ENCODE measurements at regions of chr19 and their contacts with region 1.

Region 1: DNA sequence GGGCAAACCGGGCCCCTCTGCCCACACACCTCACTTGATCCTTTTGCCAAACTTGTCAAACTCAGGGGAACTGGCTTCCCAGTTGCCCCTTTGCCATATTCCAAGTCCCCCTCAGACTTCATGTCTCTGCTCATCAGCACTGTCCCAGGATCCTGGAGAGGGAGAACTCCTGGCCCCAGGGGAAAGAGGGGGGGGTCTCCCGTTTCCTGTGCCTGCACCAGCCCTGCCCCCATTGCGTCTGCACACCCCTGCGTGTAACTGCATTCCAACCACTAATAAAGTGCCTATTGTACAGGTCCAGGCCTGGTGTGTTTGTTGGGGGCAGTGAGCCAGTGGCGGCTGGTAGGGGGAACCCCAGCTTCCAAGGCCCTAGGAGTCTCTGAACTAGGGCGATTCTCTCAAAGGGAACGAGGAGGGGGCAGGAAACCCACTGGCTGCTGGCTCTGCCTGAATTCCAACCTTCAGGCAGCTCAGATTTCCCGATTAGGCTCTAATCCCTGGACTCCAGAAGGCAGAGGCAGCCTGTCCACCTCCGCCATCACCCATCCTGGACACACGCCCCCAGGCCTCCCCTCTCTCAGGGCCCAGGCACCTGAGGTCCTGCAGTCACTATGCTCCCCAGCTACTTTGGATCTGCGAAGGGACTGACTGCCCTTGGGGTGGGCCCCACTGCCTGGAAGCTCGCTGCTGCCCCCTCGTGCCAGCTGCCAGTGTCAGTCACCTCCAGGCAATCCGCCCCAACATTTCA is 9.7 kb upstream of the ILF3 start:
- DNase-seq: peak; percentile 86
- H3K4me3 Mint-ChIP-seq: no peak overlapping the region
- H3K27ac Mint-ChIP-seq: peak overlapping the region; percentile 9
- H3K4me1 Mint-ChIP-seq: no peaks in the 10 kb centered on the region
- H3K27me3 Mint-ChIP-seq: no peaks in the 10 kb centered on the region
- CTCF ChIP-seq: peak; percentile 77

Region 2: DNA sequence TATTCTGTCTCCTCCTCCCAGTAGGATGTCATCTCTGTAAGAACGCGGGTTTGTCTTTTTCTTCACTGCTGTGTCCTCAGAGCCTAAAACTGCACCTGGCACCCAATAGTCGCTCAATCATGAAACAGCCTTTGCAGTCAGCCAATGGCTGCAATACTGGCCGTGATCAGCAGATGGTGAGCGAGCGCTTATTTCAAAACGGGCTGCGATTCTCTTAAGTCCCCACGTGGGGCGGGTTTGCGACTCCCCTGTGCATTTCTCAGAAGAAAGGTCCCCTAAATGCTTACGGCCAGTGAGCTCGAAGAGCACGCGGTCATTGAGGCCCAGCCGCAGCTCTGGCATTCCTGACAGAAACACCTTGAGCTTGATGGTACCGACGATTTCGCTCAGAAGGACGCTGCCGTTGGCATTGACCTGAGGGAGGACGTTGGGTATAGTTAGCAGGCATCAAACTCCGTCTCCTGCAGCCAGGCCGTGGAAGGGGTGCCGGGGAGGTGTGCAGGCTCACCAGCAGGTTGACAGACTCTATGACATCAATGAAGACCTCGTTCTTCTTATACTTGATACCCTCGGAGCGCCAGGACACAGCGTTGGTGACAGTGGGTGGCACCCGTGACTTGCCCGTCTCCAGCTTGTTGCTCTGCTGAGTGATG is 63.3 kb before region 1 on chr19:
- CTCF ChIA-PET with region 1: interaction called, 46 read pairs
- intact Hi-C with region 1: loop called (anchors 1 kb)
- DNase-seq: peak; percentile 78
- H3K4me3 Mint-ChIP-seq: no peak overlapping the region
- H3K27ac Mint-ChIP-seq: no peak overlapping the region
- H3K4me1 Mint-ChIP-seq: no peaks in the 10 kb centered on the region
- H3K27me3 Mint-ChIP-seq: no peaks in the 10 kb centered on the region
- CTCF ChIP-seq: peak; percentile 95

Region 3: DNA sequence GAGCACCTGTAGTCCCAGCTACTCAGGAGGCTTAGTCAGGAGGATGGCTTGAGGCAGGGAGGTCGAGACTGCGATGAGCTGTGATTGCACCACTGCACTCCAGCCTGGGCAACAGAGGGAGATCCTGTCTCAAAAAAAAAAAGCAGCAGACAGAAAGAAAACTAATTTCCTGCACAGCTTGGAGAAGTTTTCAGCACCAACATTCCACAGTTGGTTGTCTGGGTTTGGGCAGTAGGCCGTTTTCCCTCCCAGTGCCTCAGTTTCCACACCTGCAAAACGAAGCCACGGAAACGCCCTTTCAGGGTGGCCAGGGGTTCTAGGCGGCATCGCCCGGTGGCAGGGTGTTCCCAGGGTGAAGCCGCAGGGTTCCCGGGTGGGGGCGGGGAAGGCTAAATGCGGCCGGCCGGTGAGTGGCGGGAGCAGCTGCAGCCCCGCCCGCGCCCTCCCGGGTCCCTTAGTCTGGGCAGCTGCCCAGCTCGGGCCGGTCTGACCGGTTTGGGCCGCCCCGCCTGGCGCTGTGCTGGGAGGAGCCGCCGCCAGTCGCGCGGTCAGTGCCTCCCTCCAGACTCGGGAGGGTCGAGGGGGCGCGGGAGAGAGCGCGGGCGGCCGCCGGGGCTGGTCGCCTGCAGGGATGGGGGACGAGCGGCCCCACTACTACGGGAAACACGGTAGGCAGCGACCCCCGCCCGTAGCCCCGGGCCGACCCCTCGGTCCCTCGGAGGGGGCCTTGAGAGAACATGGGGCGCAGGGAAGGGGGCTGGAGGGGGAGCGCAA is 19.2 kb before region 1 on chr19 and contains the start of gene SLC44A2:
- CTCF ChIA-PET with region 1: interaction called, 10 read pairs
- intact Hi-C with region 1: no loop called
- DNase-seq: peak; percentile 94
- H3K4me3 Mint-ChIP-seq: peak within 1 kb of the TSS; percentile 82
- H3K27ac Mint-ChIP-seq: peak within 1 kb of the TSS; percentile 84
- H3K4me1 Mint-ChIP-seq: peaks cover 20% of the 10 kb centered on the region
- H3K27me3 Mint-ChIP-seq: no peaks in the 10 kb centered on the region
- CTCF ChIP-seq: no peak
- total RNA-seq, gene SLC44A2: 130 and 151 TPM in 2 replicates